Aorta (tissue), 5 donors: ENCODE measurements at regions of chr9 and their contacts with region 1.

Region 1: GRCh38 chr9:23739753-23740152 is 86.3 kb downstream of the ELAVL2 start:
- DNase-seq: no peak
- ATAC-seq: no peak
- H3K4me3 ChIP-seq: no peak overlapping the region
- H3K27ac ChIP-seq: no peak overlapping the region
- H3K4me1 ChIP-seq: no peaks in the 10 kb centered on the region
- H3K27me3 ChIP-seq: no peaks in the 10 kb centered on the region

Region 2: DNA sequence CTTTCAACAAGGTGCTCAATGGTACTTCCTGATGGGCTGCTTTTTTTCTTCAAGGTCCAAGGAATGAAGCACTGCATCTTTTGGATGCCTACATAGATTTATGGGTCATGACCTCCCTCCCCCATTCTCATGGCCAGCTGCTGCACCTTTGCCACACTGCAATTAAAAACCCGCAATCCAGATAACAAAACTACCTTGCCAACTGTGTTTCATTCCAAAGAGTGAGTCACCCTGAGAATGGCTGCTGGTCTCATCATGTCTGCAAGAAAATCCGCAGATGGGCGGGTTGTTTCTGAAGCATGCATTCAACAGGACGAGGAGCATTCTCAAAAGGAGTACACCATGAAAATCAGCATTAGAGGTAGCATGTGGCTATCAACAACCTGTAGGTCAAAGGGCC is 53.5 kb before region 1 on chr9:
- intact Hi-C with region 1: loop called in 1 of 2 experiments (anchors 5 kb)
- DNase-seq: no peak
- ATAC-seq: no peak
- H3K4me3 ChIP-seq: no peak overlapping the region
- H3K27ac ChIP-seq: no peak overlapping the region
- H3K4me1 ChIP-seq: peaks cover 0 to 1% of the 10 kb centered on the region in 2 donors
- H3K27me3 ChIP-seq: peaks cover 0 to 1% of the 10 kb centered on the region in 2 donors